Motor neuron (in vitro differentiated cells): ENCODE measurements at regions of chr2 and their contacts with region 1.

Region 1: DNA sequence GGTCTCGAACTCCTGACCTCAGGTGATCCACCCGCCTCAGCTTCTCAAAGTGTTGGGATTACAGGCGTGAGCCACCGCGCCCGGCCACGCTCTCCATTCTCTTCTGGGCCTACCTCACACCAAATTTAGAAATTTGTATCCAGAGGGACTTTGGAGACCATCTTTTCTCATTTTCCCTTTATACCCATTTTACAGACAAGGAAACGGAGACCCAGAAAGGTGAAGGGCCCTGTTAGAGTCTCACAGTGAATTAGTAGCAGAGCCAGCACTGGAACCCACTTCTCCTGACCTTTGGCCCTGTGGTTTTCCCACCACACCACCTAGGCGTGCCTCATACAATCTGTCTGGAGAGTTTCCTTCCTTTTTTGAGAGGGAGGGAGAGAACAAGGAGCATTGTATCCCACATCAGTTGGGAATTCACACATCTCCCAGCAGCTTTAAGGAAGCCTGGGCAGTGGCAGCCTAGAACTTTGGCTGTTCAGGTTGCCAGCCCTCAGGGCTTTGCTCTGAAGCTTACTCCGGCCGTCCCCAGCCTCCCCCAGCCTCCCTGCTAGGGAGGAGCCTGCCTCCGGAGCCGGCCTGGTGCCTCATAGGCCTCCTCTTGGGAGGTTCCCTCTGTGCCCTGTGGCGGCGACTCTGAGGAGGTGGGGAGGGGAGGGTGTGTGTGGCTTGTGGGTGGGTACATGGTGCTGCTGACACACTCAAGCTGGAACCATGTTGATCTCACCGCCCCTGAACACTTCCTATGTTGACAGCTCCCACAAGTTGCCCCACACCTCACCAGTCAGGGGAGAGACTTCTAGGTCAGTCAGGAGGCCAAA is 13.8 kb downstream of the FOSL2 start:
- ATAC-seq: peak in 3 of 8 experiments; percentile 4 to 55 (median 47)
- H3K4me3 ChIP-seq: no peak overlapping the region
- H3K27ac ChIP-seq: no peak overlapping the region
- H3K4me1 ChIP-seq: no peaks in the 10 kb centered on the region

Region 2: DNA sequence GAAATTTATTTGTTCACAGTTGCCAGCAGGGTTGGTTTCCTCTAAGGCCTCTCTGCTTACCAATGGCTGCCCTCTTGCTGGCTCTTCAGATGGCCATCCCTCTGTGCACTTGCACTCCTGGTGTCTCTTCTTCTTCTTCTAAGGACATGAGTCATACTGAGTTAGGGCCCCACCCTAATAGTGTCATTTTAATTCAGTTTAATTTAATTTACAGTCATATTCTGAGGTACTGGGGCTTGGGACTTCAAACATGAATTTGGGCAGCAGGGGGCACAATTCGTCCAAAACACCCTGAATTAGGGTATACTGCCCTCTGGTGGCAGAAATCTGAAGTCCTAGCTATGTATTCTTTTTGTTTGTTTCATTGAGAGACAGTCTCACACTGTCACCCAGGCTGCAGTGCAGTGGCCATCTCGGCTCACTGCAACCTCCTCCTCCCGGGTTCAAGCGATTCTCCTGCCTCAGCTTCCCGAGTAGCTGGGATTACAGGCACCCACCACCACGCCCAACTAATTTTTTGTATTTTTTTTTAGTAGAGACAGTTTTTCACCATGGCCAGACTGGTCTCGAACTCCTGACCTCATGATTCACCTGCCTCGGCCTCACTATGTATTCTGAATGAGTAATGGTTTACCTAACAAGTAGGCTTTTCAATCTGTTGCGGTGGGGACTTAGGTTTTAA is 723.0 kb before region 1 on chr2:
- in situ Hi-C with region 1: loop called in 1 of 9 experiments (anchors 25 kb)
- ATAC-seq: peak in 7 of 8 experiments; percentile 22 to 98 (median 77)
- H3K4me3 ChIP-seq: no peak overlapping the region
- H3K27ac ChIP-seq: no peak overlapping the region
- H3K4me1 ChIP-seq: no peaks in the 10 kb centered on the region

Region 3: GRCh38 chr2:27735263-27735953 is 671.1 kb before region 1 on chr2:
- in situ Hi-C with region 1: loop called in 1 of 9 experiments (anchors 25 kb)
- ATAC-seq: peak; percentile 48 to 96 (median 66)
- H3K4me3 ChIP-seq: peak overlapping the region in 2 of 5 donors; percentile 8 to 19
- H3K27ac ChIP-seq: no peak overlapping the region
- H3K4me1 ChIP-seq: no peaks in the 10 kb centered on the region